Uterus (tissue), 4 donors: ENCODE measurements at regions of chr7 and their contacts with region 1.

Region 1: GRCh38 chr7:93902777-93903423 is 3.5 kb upstream of the GNGT1 start:
- DNase-seq: no peak
- H3K4me3 ChIP-seq: no peak overlapping the region
- H3K27ac ChIP-seq: no peak overlapping the region
- H3K4me1 ChIP-seq: no peaks in the 10 kb centered on the region
- H3K27me3 ChIP-seq: no peaks in the 10 kb centered on the region
- CTCF ChIP-seq: peak; percentile 59 to 78 (median 72)
- POLR2A ChIP-seq: no peak

Region 2: DNA sequence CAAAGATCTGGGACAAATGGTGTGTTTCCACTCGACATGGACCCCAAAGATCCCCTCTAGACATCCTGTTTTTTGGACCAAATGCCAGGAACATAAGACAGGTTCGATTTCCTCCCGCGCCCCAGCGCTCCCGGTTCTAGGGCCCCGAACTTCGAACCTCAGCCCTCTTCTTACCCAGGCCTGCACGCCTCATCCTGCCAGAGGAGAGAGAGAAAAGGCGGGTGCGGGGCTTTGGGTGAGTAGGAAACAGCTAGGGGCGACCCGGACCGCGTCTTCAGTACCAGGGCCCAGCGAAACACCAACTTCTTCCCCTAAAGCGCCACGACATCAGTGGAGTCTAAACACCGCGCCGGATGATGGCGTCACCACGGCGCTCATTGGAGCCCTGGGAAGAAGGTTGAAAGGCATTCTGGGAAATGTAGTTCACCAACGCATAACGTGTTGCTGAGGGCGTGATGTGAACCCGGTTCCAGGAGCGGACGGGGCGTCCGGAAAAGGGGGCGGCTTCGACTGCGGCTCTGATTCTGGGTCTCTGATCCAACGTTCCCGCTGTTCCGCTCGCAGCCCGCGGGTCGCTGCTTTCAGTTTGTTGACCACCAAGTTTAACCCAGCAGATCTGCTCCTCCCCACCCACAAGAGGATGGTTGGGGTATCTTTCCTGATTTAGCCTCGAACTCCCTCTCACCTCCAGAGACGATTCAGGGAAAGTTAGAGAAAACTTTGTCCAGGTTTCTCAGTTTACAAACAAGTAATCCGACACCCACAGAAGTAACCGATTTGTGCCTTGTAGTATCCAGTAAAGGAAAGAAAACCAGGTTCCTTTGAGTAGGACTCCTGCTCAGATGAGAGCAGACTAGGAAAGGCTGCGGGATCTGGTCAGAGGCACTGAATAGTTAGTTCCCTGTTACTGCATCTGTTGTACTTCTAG is 101.4 kb after region 1 on chr7 and contains the start of gene BET1:
- intact Hi-C with region 1: loop called (anchors 10 kb)
- DNase-seq: peak; percentile 93 to 96
- H3K4me3 ChIP-seq: peak within 1 kb of the TSS; percentile 88 to 96
- H3K27ac ChIP-seq: peak within 1 kb of the TSS; percentile 91 to 95
- H3K4me1 ChIP-seq: no peaks in the 10 kb centered on the region
- H3K27me3 ChIP-seq: no peaks in the 10 kb centered on the region
- CTCF ChIP-seq: peak in 1 of 4 experiments; percentile 7
- POLR2A ChIP-seq: peak; percentile 69 to 73
- total RNA-seq, gene BET1: 10.3 to 74.5 (median 18.6) TPM